Tibial artery (tissue), 4 donors: ENCODE measurements at regions of chr15 and their contacts with region 1.

Region 1: GRCh38 chr15:26901041-26901440 is 34.2 kb downstream of the GABRA5 start:
- DNase-seq: no peak
- H3K4me3 ChIP-seq: no peak overlapping the region
- H3K27ac ChIP-seq: no peak overlapping the region
- H3K4me1 ChIP-seq: no peaks in the 10 kb centered on the region
- H3K27me3 ChIP-seq: no peaks in the 10 kb centered on the region
- CTCF ChIP-seq: no peak

Region 2: DNA sequence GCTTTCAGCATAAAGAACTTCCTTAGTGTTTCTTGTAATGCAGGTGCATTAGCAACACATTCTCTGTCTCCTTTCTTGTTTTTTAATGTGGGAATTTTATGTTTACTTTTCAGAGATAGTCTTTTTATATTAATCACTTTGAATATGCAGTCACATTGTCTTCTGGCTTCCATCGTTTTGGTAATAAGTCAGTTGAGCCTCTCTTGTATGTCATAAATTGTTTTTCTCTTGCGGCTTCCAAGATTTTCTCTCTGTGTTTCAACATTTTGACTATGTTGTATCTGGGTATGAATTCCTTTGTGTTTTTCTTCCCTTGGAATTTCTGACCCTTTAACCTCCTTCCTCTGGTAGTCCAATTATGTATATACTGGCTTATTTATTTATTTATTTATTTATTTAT is 95.2 kb after region 1 on chr15:
- intact Hi-C with region 1: loop called (anchors 10 kb)
- DNase-seq: no peak
- H3K4me3 ChIP-seq: no peak overlapping the region
- H3K27ac ChIP-seq: no peak overlapping the region
- H3K4me1 ChIP-seq: no peaks in the 10 kb centered on the region
- H3K27me3 ChIP-seq: no peaks in the 10 kb centered on the region
- CTCF ChIP-seq: no peak

Region 3: DNA sequence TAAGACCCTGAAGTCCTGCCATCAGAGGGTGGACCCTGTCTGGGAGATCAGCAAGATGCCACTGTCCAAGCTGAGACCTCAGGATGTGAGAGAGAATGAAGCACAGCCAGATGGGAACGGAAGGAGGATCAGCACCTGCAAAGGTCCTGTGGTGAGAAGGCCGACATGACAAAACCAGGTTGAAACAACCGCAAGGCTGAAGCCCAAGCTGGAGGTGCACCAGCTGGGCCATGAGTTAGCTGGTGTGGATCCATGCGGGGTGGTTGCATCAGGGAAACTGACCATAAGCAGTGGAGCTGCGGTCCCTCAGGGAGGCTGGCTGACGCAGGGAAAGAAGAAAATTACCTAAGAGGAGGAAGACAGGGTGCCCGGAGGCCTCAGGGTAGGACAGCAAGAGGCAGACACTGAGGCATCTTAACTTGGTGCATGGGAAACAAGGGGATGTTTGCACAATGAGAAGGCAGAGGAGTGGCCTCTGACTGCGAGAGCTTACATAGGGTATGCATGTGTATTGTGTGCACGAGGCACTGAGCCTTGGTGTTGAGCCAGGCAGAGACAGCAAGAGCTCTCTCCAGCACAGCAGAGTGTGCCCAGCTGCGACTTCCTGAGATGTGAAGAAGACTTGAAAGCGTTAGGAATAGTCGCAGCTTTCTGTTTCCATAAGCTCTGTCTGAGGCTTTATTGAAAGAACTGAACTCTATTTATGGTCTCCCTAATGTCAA is 700.4 kb after region 1 on chr15:
- intact Hi-C with region 1: loop called (anchors 5 kb)
- DNase-seq: no peak
- H3K4me3 ChIP-seq: no peak overlapping the region
- H3K27ac ChIP-seq: no peak overlapping the region
- H3K4me1 ChIP-seq: no peaks in the 10 kb centered on the region
- H3K27me3 ChIP-seq: no peaks in the 10 kb centered on the region
- CTCF ChIP-seq: no peak